K562 (cell line): ENCODE measurements at regions of chr15 and their contacts with region 1.

Region 1: DNA sequence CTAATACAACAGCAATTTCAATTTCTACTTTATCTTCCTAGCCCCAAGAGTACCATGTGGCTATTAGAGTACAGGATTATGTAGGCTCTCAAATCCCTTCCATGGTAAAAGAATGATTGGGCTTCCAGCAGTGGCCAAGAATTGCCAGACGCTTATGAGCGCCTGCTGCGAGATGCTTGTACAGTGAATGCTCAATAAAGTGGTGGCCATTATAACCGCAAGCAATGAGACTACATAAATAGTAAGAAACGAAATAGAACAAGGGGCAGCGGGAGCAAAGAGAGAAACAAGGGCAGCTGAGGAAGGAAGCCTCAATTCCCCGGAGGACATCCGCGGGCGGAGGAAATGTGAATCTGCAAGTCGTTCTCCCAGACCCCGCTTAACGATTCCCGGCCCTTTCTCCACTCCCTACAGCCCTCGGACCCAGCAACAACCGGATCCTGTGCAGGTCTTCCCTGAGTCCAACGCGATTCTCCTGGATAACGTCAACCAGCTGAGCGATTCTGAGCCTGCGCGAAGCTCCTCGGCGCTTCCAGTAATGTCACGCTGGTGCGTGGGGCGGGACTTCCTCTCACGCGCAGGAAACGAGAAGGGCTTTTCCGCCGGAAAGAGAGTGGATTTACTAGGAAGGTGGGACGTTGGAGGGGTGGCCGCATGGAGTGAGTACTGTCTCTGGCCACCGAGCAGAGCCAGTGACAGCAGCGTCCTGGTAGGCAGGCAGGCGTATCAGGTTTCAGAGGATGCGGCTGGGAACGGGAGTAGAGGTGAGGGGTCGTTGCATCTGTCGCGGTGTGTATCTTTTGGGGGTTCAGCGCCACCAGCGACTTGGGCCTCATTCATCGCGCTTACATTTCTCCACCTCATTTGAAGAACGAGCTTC is 40.5 kb upstream of the AP3B2 start:
- DNase-seq: peak; percentile 79 to 98 (median 84)
- ATAC-seq: peak; percentile 96
- H3K4me3 ChIP-seq: peak overlapping the region; percentile 92
- H3K27ac ChIP-seq: peak overlapping the region; percentile 96
- H3K4me1 ChIP-seq: peaks cover 9 to 10% of the 10 kb centered on the region in 2 experiments; a peak in 4 of 5 replicates
- H3K27me3 ChIP-seq: no peaks in the 10 kb centered on the region
- CTCF ChIP-seq: no peak
- EP300 ChIP-seq: peak; percentile 71
- POLR2A ChIP-seq: peak; percentile 97
- RAD21 ChIP-seq: no peak

Region 2: GRCh38 chr15:82540055-82540983 is 209.9 kb before region 1 on chr15 and contains the start of gene RPS17:
- CTCF ChIA-PET with region 1: no interaction called
- POLR2A ChIA-PET with region 1: interaction called, 35 read pairs
- in situ Hi-C with region 1: no loop called
- intact Hi-C with region 1: no loop called
- DNase-seq: peak; percentile 98 to 99 (median 98)
- ATAC-seq: peak; percentile 93
- H3K4me3 ChIP-seq: peak within 1 kb of the TSS; percentile 95
- H3K27ac ChIP-seq: peak within 1 kb of the TSS; percentile 93
- H3K4me1 ChIP-seq: peaks cover 10 to 17% of the 10 kb centered on the region in 2 experiments; a peak in 4 of 5 replicates
- H3K27me3 ChIP-seq: no peaks in the 10 kb centered on the region
- CTCF ChIP-seq: peak; percentile 96 to 98 (median 97)
- EP300 ChIP-seq: peak; percentile 25; the same call in 1 of the 2 replicates
- POLR2A ChIP-seq: peak; percentile 99
- RAD21 ChIP-seq: peak; percentile 45 to 57
- polyA plus RNA-seq, gene RPS17: 1,988 to 2,233 TPM

Region 3: GRCh38 chr15:82737975-82738374 is 12.2 kb before region 1 on chr15:
- CTCF ChIA-PET with region 1: no interaction called
- POLR2A ChIA-PET with region 1: interaction called, 25 read pairs
- in situ Hi-C with region 1: no loop called
- intact Hi-C with region 1: no loop called
- DNase-seq: peak in 2 of 4 experiments; percentile 26 to 32
- ATAC-seq: peak; percentile 79
- H3K4me3 ChIP-seq: no peak overlapping the region
- H3K27ac ChIP-seq: peak overlapping the region; percentile 41; the same call in 1 of the 3 replicates
- H3K4me1 ChIP-seq: peaks cover 0 to 7% of the 10 kb centered on the region in 2 experiments; a peak in 2 of 5 replicates
- H3K27me3 ChIP-seq: no peaks in the 10 kb centered on the region
- CTCF ChIP-seq: no peak
- EP300 ChIP-seq: no peak
- POLR2A ChIP-seq: no peak
- RAD21 ChIP-seq: no peak

Region 4: GRCh38 chr15:82763361-82764116 is 13.3 kb after region 1 on chr15:
- CTCF ChIA-PET with region 1: no interaction called
- POLR2A ChIA-PET with region 1: interaction called, 37 read pairs
- in situ Hi-C with region 1: no loop called
- intact Hi-C with region 1: no loop called
- DNase-seq: no peak
- ATAC-seq: no peak
- H3K4me3 ChIP-seq: no peak overlapping the region
- H3K27ac ChIP-seq: no peak overlapping the region
- H3K4me1 ChIP-seq: peaks cover 0 to 3% of the 10 kb centered on the region in 2 experiments; a peak in 1 of 5 replicates
- H3K27me3 ChIP-seq: no peaks in the 10 kb centered on the region
- CTCF ChIP-seq: no peak
- EP300 ChIP-seq: no peak
- POLR2A ChIP-seq: no peak
- RAD21 ChIP-seq: no peak

Region 5: DNA sequence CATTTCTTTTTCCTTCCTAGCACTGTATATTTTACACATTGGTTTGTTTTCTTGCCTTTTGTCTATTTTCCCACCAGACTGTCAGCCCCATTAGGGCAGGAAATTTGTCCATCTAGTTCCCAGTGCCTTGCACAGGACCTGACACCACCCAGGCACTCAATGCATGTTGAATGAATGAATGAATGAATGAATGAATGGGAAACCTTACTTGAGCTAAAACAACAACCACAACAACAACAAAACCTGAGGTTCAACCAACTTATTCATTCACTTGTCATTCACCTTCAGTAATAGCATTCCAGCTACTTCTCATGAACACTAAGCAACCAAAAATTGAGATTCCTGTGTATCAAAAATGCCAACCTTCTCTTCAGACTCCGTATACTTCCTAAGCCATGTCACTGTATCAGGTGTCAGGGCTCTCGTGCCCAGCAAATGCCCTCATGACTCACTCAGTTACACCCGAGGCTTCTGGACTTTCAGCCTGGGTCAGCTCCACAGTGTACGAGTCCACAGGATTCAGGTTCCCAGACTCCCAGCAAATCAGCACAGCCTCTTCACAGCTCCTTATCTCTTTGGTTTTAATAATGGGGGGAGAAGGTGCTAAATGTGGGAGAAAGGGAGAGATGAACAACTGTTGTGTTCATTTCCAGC is 18.4 kb after region 1 on chr15:
- CTCF ChIA-PET with region 1: no interaction called
- POLR2A ChIA-PET with region 1: interaction called, 37 read pairs
- in situ Hi-C with region 1: no loop called
- intact Hi-C with region 1: no loop called
- DNase-seq: no peak
- ATAC-seq: no peak
- H3K4me3 ChIP-seq: no peak overlapping the region
- H3K27ac ChIP-seq: no peak overlapping the region
- H3K4me1 ChIP-seq: peaks cover 0 to 8% of the 10 kb centered on the region in 2 experiments; a peak in 3 of 5 replicates
- H3K27me3 ChIP-seq: 0 out of 5 replicates have a peak, but pooled peaks cover 0 to 6% of the 10 kb centered on the region in 2 experiments
- CTCF ChIP-seq: no peak
- EP300 ChIP-seq: no peak
- POLR2A ChIP-seq: no peak
- RAD21 ChIP-seq: no peak

Region 6: GRCh38 chr15:82809404-82810060 is 59.3 kb after region 1 on chr15 and contains the start of gene WHAMM:
- CTCF ChIA-PET with region 1: no interaction called
- POLR2A ChIA-PET with region 1: interaction called, 5 read pairs
- in situ Hi-C with region 1: no loop called
- intact Hi-C with region 1: loop called (anchors 2 kb)
- DNase-seq: peak; percentile 98 to 99 (median 98)
- ATAC-seq: peak; percentile 96
- H3K4me3 ChIP-seq: peak within 1 kb of the TSS; percentile 94
- H3K27ac ChIP-seq: peak within 1 kb of the TSS; percentile 93
- H3K4me1 ChIP-seq: peaks cover 12 to 21% of the 10 kb centered on the region in 2 experiments; a peak in 4 of 5 replicates
- H3K27me3 ChIP-seq: no peaks in the 10 kb centered on the region
- CTCF ChIP-seq: peak in 2 of 3 experiments; percentile 19 to 44; a peak in 2 of 6 replicates
- EP300 ChIP-seq: no peak
- POLR2A ChIP-seq: peak; percentile 91
- RAD21 ChIP-seq: no peak
- polyA plus RNA-seq, gene WHAMM: 2.0 to 2.3 TPM

Region 7: DNA sequence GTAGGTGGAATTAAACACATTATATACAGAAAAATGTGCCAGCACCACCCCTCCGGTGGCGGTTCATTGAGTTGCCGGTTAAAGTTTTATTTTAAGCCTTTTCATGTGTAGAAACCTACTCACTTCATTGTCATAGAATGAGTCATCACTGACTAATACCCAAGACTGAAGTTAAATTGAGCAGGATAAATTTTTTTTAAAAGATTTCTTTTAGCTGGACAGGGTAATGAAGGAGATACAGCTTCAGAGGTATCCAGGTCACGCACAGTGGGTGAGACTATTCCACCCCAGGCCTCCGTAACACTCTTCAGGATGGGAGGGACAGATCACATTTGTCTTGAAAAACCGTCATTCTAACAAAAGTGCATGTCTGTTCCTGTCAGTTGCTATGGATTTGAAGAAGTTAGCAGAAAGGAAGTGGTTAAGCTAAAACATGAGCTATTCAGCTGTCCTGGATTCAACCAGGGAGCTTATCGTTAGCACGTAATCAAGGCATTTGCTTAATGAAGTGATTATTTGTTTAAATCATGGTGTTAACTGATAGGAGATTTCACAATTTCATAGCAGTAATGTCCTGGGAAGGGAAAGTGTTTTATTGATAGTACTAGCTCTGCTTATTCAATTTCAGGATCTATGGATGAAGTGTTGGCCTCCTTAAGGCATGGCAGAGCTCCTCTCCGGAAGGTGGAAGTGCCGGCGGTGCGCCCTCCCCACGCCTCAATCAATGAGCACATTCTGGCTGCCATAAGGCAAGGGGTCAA is 82.6 kb after region 1 on chr15:
- CTCF ChIA-PET with region 1: no interaction called
- POLR2A ChIA-PET with region 1: no interaction called
- in situ Hi-C with region 1: no loop called
- intact Hi-C with region 1: no loop called
- DNase-seq: no peak
- ATAC-seq: no peak
- H3K4me3 ChIP-seq: no peak overlapping the region
- H3K27ac ChIP-seq: no peak overlapping the region
- H3K4me1 ChIP-seq: no peaks in the 10 kb centered on the region
- H3K27me3 ChIP-seq: no peaks in the 10 kb centered on the region
- CTCF ChIP-seq: no peak
- EP300 ChIP-seq: no peak
- POLR2A ChIP-seq: no peak
- RAD21 ChIP-seq: no peak